GM18951 (cell line): ENCODE measurements at regions of chr17 and their contacts with region 1.

Region 1: DNA sequence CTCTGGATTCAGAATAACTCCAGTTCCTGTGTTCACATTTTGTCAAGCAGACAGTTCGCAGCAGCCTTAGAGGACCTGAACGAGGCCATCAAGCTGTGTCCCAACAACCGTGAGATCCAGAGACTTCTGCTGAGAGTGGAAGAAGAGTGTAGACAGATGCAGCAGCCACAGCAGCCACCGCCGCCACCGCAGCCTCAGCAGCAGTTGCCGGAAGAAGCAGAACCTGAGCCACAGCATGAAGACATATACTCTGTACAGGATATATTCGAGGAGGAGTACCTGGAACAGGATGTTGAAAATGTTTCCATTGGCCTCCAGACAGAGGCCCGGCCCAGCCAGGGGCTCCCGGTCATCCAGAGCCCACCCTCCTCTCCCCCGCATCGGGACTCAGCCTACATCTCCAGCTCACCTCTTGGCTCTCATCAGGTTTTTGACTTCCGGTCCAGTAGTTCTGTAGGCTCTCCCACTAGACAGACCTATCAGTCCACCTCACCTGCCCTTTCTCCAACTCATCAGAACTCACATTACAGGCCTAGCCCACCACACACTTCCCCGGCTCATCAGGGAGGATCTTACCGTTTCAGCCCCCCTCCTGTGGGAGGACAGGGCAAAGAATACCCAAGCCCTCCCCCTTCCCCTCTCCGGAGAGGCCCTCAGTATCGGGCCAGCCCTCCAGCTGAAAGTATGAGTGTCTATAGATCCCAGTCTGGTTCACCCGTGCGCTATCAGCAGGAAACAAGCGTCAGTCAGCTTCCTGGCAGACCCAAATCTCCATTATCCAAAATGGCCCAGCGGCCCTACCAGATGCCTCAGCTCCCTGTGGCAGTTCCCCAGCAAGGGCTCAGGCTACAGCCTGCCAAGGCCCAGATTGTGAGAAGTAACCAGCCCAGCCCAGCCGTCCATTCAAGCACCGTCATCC is 25.9 kb downstream of the CYB561 start:
- POLR2A ChIP-seq: no peak

Region 2: GRCh38 chr17:63478791-63479494 is 58.7 kb after region 1 on chr17:
- in situ Hi-C with region 1: loop called (anchors 5 kb)
- POLR2A ChIP-seq: no peak

Region 3: GRCh38 chr17:63611354-63611753 is 191.1 kb after region 1 on chr17:
- in situ Hi-C with region 1: loop called (anchors 5 kb)
- POLR2A ChIP-seq: no peak